B cell (primary cell): ENCODE measurements at regions of chr9 and their contacts with region 1.

Region 1: GRCh38 chr9:131627648-131628458 is 82.5 kb downstream of the PRRT1B start:
- DNase-seq: peak; percentile 84
- ATAC-seq: peak; percentile 79
- H3K4me3 ChIP-seq: no peak overlapping the region
- H3K4me3 Mint-ChIP-seq: peak overlapping the region; percentile 89
- H3K27ac ChIP-seq: peak overlapping the region; percentile 83 to 85
- H3K27ac Mint-ChIP-seq: peak overlapping the region; percentile 94
- H3K4me1 ChIP-seq: peaks cover 24 to 52% of the 10 kb centered on the region in 2 donors
- H3K4me1 Mint-ChIP-seq: peaks cover 65% of the 10 kb centered on the region
- H3K27me3 ChIP-seq: no peaks in the 10 kb centered on the region
- H3K27me3 Mint-ChIP-seq: no peaks in the 10 kb centered on the region
- CTCF ChIP-seq: no peak

Region 2: GRCh38 chr9:131502781-131503625 is 124.8 kb before region 1 on chr9 and contains the start of gene POMT1:
- CTCF ChIA-PET with region 1: no interaction called
- POLR2A ChIA-PET with region 1: no interaction called
- intact Hi-C with region 1: loop called (anchors 5 kb)
- DNase-seq: peak; percentile 93
- ATAC-seq: peak; percentile 86
- H3K4me3 ChIP-seq: peak within 1 kb of the TSS; percentile 63 to 92 (median 86)
- H3K4me3 Mint-ChIP-seq: peak within 1 kb of the TSS; percentile 94
- H3K27ac ChIP-seq: peak within 1 kb of the TSS; percentile 27 to 70
- H3K27ac Mint-ChIP-seq: peak within 1 kb of the TSS; percentile 88
- H3K4me1 ChIP-seq: peaks cover 11 to 22% of the 10 kb centered on the region in 2 donors
- H3K4me1 Mint-ChIP-seq: peaks cover 24% of the 10 kb centered on the region
- H3K27me3 ChIP-seq: no peaks in the 10 kb centered on the region
- H3K27me3 Mint-ChIP-seq: no peaks in the 10 kb centered on the region
- CTCF ChIP-seq: no peak
- total RNA-seq, gene POMT1: 41.9 and 46.7 TPM in 2 replicates

Region 3: DNA sequence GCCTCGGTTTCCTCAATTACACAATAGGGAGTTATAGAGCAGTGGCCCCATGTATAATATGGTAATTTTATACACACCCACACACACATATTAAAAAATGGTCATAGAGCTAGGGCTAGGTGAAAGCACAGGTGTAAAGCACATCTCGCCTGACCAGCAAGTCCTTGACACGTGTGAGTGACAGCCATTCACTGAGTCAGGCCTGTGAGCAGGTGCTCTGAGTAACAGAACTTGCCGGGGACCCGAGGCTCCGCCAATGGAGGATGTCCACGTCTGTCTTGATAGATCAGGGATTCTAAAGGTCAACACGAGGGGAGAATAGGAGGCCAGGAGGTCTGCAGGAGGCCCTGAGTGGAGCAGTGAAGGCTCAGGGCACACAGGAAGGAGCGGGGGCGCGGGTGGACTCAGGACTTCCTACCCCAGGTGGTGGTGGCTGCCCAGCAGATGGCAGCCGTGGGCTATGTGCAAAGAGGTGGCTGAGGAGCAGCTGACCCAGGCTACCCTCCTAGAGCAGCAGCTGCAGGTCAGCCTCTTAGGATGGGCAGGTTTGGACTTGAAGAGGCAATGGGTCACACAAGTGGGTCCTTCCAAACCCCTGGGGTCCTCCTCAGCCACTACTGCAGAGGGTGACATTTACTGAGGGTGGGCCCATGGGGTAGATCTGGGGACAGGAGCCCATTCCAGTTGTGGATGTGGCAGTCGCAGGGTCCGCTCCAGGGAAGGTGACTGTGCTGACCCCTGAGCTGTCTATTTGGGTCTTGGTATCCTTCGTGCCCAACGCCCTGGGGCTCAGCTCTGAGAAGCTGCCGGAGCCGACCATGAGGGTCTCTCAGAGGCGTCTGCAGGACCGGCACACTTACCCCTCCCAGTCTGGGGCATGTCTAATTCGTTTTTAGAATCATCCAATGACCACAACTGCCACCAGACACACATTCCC is 36.7 kb before region 1 on chr9:
- CTCF ChIA-PET with region 1: interaction called, 13 read pairs
- POLR2A ChIA-PET with region 1: no interaction called
- intact Hi-C with region 1: loop called (anchors 5 kb)
- DNase-seq: peak; percentile 85
- ATAC-seq: peak; percentile 87
- H3K4me3 ChIP-seq: no peak overlapping the region
- H3K4me3 Mint-ChIP-seq: no peak overlapping the region
- H3K27ac ChIP-seq: no peak overlapping the region
- H3K27ac Mint-ChIP-seq: peak overlapping the region; percentile 82
- H3K4me1 ChIP-seq: peaks cover 0 to 13% of the 10 kb centered on the region in 2 donors
- H3K4me1 Mint-ChIP-seq: peaks cover 27% of the 10 kb centered on the region
- H3K27me3 ChIP-seq: no peaks in the 10 kb centered on the region
- H3K27me3 Mint-ChIP-seq: no peaks in the 10 kb centered on the region
- CTCF ChIP-seq: peak; percentile 83

Region 4: DNA sequence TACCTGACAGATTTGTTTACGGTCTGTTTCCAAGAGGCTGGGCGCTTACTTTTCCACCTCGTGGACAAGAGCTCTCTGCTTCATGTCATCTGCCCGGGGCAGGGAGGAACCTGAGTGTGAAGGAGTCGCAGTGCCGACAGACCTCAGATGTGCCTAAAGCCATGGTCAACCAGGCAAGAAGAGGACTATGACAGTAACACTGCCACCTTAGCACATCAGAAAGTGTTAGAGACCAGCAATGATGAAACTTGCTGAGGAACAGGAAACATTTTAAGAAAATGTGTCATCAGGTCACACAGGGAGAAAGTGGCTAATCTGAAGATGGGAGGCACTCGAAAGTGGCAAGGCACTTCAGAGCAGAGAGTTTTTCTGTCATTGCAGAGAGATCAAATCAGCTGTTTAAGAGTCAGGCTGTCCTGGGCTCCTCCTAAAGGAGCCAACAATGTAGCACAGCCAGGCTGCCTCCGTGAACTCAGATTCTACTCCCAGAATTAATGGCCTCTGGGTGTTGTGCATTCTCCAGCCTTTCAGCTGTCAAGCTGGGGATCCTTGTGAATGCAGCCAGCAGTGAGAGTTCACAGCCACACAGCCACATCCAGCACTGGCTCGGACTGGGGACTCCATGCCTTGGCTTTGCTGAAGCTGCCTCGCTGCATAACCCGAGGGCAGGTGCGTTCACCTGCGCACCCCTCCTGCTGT is 17.4 kb after region 1 on chr9:
- CTCF ChIA-PET with region 1: interaction called, 8 read pairs
- POLR2A ChIA-PET with region 1: interaction called, 3 read pairs
- intact Hi-C with region 1: loop called (anchors 1 kb)
- DNase-seq: no peak
- ATAC-seq: no peak
- H3K4me3 ChIP-seq: no peak overlapping the region
- H3K4me3 Mint-ChIP-seq: peak overlapping the region; percentile 2
- H3K27ac ChIP-seq: peak overlapping the region in 1 of 2 donors; percentile 61
- H3K27ac Mint-ChIP-seq: peak overlapping the region; percentile 62
- H3K4me1 ChIP-seq: peaks cover 0 to 9% of the 10 kb centered on the region in 2 donors
- H3K4me1 Mint-ChIP-seq: peaks cover 41% of the 10 kb centered on the region
- H3K27me3 ChIP-seq: no peaks in the 10 kb centered on the region
- H3K27me3 Mint-ChIP-seq: no peaks in the 10 kb centered on the region
- CTCF ChIP-seq: no peak